ENCODE measurements at regions of chr2 and their contacts with region 1.

Region 1: GRCh38 chr2:235595422-235596010 is 101.7 kb downstream of the AGAP1 start:
- DNase-seq: peak; percentile 83
- H3K4me3 ChIP-seq: no peak overlapping the region; a peak in 1 of 4 replicates
- H3K27ac ChIP-seq: no peak overlapping the region
- H3K4me1 ChIP-seq: peaks cover 0 to 4% of the 10 kb centered on the region in 2 experiments; a peak in 1 of 4 replicates
- H3K27me3 ChIP-seq: no peaks in the 10 kb centered on the region
- CTCF ChIP-seq: peak; percentile 90
- EP300 ChIP-seq: no peak
- RAD21 ChIP-seq: peak; percentile 96

Region 2: GRCh38 chr2:235135990-235136561 is 459.4 kb before region 1 on chr2:
- CTCF ChIA-PET with region 1: interaction called, 129 read pairs
- POLR2A ChIA-PET with region 1: no interaction called
- DNase-seq: peak; percentile 78
- H3K4me3 ChIP-seq: no peak overlapping the region; a peak in 1 of 4 replicates
- H3K27ac ChIP-seq: no peak overlapping the region
- H3K4me1 ChIP-seq: no peaks in the 10 kb centered on the region
- H3K27me3 ChIP-seq: no peaks in the 10 kb centered on the region; the same call in 1 of the 2 replicates
- CTCF ChIP-seq: peak; percentile 74
- EP300 ChIP-seq: no peak
- RAD21 ChIP-seq: peak; percentile 84

Region 3: DNA sequence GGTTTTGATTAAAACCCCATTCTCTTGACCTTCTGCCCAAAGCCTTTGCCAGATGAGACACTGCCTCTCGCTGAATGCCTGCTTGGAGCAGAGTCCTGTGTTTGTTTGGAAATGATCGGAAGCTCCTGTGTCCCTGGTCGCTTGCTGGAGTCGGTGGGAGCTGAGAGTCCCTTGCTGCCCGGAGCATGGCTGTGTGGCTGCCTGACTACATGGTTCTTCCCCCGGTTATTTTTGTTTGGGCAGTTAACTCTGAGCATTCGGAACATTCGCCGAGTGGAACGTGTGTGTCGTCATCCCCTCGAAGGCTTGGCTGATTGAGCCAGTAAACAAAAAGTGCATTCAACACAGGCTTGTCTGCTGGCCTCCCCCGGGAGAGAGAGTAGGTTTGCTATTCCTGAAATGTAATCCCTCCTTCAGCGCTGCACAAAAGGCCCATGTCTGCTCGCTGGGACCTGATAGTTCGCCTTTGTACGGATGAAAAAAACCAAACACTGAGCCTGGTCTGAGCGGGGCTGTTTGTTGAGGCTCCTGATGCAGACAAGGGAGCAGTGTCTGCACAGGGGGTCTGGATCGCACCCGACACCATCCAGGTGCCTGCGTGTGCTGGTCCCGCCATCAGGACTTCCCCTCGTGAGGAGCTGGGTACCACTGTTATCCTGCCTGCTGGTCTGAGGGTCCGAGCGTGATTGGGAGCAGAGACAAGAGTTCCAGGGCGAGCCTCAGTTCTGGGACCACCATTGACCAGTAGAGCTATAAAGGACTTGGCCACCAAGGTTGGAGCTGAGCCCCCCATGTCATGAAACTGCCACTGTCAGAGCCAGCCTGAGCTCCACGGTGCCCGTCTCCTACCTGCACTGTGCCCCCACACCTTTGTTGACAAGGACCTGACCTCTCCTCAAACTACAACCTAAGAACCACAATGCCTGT is 17.8 kb before region 1 on chr2:
- CTCF ChIA-PET with region 1: interaction called, 41 read pairs
- POLR2A ChIA-PET with region 1: no interaction called
- DNase-seq: no peak
- H3K4me3 ChIP-seq: no peak overlapping the region
- H3K27ac ChIP-seq: no peak overlapping the region
- H3K4me1 ChIP-seq: peaks cover 0 to 21% of the 10 kb centered on the region in 2 experiments; a peak in 2 of 4 replicates
- H3K27me3 ChIP-seq: no peaks in the 10 kb centered on the region
- CTCF ChIP-seq: no peak
- EP300 ChIP-seq: no peak
- RAD21 ChIP-seq: no peak

Region 4: DNA sequence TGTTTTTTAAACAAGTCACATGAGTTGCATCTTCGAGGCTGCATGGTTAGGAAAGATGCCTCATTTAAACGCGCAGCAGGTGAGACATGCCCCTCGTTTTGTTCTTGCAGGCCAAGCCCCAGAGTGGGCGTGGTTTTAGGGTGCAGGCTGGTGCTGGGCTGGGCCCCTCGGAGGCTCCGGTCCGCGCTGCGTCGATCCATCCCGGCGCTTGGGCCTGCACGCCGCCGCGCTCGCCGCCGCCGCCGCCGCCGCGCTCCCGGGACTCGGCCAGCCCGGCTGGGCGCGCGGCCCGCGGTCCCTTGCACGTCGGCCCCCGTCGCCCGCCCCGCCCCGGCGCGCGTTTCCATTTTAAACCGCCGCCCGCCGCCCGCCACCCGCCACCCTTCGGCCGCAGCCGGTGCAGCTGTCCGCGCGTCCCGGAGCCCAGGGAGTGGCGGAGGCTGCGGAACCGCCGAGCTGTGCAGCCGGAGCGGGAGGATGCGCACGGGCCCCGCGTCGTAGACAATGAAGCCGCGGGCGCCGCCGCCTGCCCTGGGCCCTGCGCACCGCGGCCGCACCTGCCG is 73.8 kb after region 1 on chr2:
- CTCF ChIA-PET with region 1: interaction called, 121 read pairs
- POLR2A ChIA-PET with region 1: no interaction called
- DNase-seq: peak; percentile 90
- H3K4me3 ChIP-seq: peak overlapping the region in 1 of 2 experiments; percentile 61; a peak in 3 of 4 replicates
- H3K27ac ChIP-seq: peak overlapping the region in 1 of 2 experiments; percentile 47; a peak in 1 of 4 replicates
- H3K4me1 ChIP-seq: peaks cover 6 to 36% of the 10 kb centered on the region in 2 experiments; a peak in 3 of 4 replicates
- H3K27me3 ChIP-seq: no peaks in the 10 kb centered on the region
- CTCF ChIP-seq: no peak
- EP300 ChIP-seq: no peak
- RAD21 ChIP-seq: no peak

Region 5: DNA sequence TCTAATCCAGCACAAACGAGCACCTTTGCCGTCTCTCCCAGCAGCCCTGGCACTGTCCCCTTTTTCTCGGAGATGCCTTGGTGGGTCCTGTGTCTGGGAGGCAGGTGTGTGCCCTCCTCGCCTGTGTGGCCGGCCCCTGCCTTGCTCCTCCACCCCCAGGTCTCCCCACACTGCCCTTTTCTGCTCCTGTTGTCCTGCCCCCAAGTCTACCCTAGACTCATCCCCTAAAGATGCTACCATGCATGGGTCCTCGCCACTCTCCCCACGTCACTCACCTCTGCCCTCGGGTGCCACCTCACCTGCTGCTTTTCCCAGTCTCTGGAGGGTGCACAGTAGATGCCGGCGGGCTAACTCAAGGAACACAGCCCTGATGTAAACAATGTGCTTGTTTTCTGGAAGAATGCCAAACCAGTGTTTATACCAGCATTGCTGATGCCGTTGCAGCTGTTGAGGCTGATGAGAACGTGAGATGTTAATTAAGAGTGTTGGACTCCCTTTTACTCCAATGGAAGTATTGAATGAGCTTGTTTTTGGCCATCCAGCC is 121.5 kb after region 1 on chr2:
- CTCF ChIA-PET with region 1: interaction called, 12 read pairs
- POLR2A ChIA-PET with region 1: no interaction called
- DNase-seq: peak; percentile 59
- H3K4me3 ChIP-seq: no peak overlapping the region
- H3K27ac ChIP-seq: no peak overlapping the region
- H3K4me1 ChIP-seq: peaks cover 0 to 38% of the 10 kb centered on the region in 2 experiments; a peak in 2 of 4 replicates
- H3K27me3 ChIP-seq: no peaks in the 10 kb centered on the region
- CTCF ChIP-seq: no peak
- EP300 ChIP-seq: no peak
- RAD21 ChIP-seq: no peak

Region 6: DNA sequence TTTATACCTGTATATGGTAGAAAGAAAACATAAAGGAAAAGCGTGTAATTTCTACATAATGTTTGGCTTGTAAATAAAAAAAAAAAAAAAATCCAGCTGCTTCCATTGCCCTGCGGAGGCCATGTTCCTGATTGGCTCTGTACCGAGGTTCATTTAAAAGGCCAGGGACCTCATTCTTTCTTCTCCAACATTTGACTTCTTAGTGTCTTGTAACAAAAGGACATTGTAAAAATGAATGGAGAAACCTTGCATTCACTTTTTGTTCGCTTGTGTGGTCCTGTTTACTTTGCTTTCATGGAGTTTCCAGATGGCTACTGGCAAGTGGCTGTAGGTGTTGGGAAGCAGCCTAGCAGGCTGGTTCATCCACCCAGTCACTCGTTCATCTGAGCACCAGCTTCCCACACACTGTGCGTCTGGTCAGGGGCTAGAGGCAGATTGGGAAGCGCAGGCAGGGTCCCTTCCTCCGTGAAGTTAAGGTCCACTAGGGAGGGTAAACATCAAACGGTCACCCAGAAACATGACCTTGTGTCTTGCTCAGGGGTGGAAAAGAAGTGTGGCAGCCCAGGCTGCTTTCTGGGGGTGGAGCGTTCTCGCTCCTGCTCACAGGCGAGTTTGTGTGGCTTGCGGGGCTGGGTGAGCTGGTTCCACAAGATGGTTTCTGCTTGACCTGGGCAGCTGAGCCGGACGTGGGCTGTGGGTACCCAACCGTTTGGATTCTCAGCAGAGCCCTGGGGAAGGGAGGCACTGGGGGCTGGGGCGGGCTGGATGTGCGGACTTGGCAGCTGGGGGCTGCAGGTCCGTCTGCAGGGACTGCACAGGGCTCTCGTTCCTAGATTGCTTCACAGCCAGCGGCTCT is 159.1 kb after region 1 on chr2:
- CTCF ChIA-PET with region 1: interaction called, 301 read pairs
- POLR2A ChIA-PET with region 1: no interaction called
- DNase-seq: no peak
- H3K4me3 ChIP-seq: no peak overlapping the region
- H3K27ac ChIP-seq: no peak overlapping the region
- H3K4me1 ChIP-seq: no peaks in the 10 kb centered on the region; a peak in 1 of 4 replicates
- H3K27me3 ChIP-seq: no peaks in the 10 kb centered on the region
- CTCF ChIP-seq: no peak
- EP300 ChIP-seq: no peak
- RAD21 ChIP-seq: no peak